ENCODE measurements at regions of chr4 and their contacts with region 1.

Region 1: GRCh38 chr4:128287871-128288688 is 467 bp upstream of the PGRMC2 start:
- DNase-seq: peak; percentile 99
- H3K4me3 ChIP-seq: peak overlapping the region; percentile 84
- H3K27ac ChIP-seq: peak overlapping the region; percentile 97
- H3K4me1 ChIP-seq: no peaks in the 10 kb centered on the region
- H3K27me3 ChIP-seq: no peaks in the 10 kb centered on the region
- CTCF ChIP-seq: no peak

Region 2: DNA sequence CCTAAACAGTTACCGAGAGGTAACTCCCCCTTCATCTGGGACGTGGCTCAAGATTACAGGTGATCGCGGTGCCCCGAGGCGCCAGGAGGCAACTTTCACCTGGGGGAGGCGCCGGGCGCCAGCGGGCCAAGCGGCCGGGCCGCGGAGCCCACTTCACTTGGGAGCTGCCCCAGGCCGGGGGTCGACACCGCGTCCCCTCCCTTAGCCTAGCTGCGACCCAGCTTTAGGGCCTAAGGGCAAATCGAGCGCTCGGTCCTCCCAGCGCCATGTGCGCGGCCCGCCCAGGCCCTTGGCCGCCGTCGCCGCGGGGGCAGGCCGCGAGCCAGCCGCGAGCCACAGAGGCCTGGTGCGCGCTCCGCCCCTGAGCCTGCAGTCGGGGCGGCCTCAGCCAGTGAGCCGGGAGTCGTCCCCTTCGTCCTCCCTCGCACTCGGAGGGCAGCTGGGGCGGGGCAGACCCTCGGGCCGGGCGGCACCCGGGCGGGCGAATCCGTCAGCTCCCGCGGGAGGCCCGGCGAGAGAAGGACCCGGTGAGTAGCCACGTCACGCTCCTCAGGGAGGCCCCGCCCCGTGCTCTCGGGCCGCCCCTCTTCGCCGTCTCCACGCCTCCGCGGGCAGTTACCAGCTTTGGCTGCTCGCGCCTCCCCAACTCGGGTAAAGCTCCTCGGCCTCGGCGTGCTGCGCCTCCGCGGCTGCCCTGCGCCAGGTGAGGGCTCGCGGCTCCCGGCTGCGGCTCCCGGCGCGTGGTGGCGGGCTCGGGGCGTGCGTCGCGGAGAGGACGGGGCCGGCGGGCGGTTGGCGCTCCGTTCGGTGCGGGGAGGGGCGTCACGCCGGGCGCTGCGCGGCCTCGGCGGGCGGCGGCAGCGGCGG is 227.1 kb before region 1 on chr4 and contains the start of gene LARP1B:
- CTCF ChIA-PET with region 1: no interaction called
- POLR2A ChIA-PET with region 1: no interaction called
- intact Hi-C with region 1: loop called (anchors 10 kb)
- DNase-seq: peak; percentile 97
- H3K4me3 ChIP-seq: peak within 1 kb of the TSS; percentile 93
- H3K27ac ChIP-seq: peak within 1 kb of the TSS; percentile 96
- H3K4me1 ChIP-seq: peaks cover 13% of the 10 kb centered on the region
- H3K27me3 ChIP-seq: no peaks in the 10 kb centered on the region
- CTCF ChIP-seq: no peak
- total RNA-seq, gene LARP1B: 20.3 and 21.5 TPM in 2 replicates

Region 3: DNA sequence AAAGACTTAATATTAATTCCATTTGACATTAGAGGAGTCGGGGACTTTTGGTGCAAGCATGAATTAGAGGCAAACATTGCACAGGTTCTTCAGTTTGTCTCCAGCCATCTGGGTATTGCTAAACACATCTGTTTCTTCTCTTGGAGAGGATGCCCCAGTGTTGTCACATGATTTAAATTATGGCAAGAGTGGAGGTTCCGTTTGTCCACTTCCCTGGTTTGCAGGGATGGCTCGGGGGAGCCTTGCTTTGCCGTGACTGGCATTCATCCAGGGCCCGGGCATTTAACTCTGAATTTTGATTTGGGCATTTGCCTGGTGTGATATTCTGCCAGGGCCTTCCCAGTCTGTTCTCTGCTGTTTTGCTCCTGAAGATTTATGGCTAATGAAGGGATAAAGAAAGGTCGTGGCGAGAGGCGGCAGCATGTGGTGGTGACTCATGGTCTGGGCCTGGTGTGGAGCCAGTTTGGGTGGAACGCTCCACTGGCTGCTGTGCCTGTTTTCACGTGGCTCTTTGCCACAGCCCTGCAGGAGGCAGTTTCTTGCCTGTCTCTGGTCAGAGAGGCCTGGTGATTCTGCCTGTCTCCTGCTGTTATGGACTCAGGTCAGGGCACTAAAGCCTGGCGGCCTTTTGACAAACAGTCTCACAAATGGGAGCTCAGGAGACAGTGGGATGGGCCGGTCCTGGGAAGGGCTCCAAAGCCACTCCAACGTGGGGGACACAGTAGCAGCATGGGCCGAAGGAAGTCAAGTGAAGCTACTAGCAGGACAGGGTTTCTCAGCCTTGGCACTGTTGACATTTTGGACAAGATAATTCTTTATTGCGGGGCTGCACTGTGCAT is 98.9 kb after region 1 on chr4:
- CTCF ChIA-PET with region 1: no interaction called
- POLR2A ChIA-PET with region 1: no interaction called
- intact Hi-C with region 1: loop called (anchors 5 kb)
- DNase-seq: peak; percentile 80
- H3K4me3 ChIP-seq: no peak overlapping the region
- H3K27ac ChIP-seq: peak overlapping the region; percentile 8
- H3K4me1 ChIP-seq: peaks cover 22% of the 10 kb centered on the region
- H3K27me3 ChIP-seq: no peaks in the 10 kb centered on the region
- CTCF ChIP-seq: no peak

Region 4: DNA sequence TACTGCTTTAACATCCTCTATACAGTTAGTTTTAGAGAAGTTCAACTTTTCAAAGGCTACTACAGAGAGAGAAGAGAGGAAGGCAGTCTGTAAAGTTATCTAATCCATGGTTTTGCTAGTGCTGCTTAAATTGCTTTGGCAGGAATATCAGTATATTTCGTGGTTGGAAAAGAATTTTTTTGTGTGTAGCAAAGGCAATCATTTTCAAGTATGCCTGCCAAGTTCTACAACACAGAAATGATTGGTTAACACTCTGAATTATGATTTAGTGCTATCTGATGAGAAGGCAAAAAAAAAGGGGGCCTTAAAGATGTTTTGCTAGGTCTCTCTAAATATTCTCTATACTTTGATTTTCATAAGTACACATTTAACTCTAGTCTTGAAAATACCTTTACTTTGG is 654.5 kb after region 1 on chr4:
- CTCF ChIA-PET with region 1: no interaction called
- POLR2A ChIA-PET with region 1: no interaction called
- intact Hi-C with region 1: no loop called
- DNase-seq: no peak
- H3K4me3 ChIP-seq: no peak overlapping the region
- H3K27ac ChIP-seq: no peak overlapping the region
- H3K4me1 ChIP-seq: no peaks in the 10 kb centered on the region
- H3K27me3 ChIP-seq: no peaks in the 10 kb centered on the region
- CTCF ChIP-seq: no peak